Activated CD4-positive, alpha-beta T cell treated with anti-CD3 and anti-CD28 coated beads, Interleukin-2, amount 10 ng/mL, durations not matched to agents 24 days and 14 days (primary cell): ENCODE measurements at regions of chr16 and their contacts with region 1.

Region 1: GRCh38 chr16:71288890-71289733 is at the start of gene CMTR2:
- DNase-seq: peak; percentile 97
- H3K4me3 Mint-ChIP-seq: peak within 1 kb of the TSS; percentile 85
- H3K27ac Mint-ChIP-seq: peak within 1 kb of the TSS; percentile 87
- H3K4me1 Mint-ChIP-seq: peaks cover 15% of the 10 kb centered on the region
- H3K27me3 Mint-ChIP-seq: peaks cover 16% of the 10 kb centered on the region
- total RNA-seq, gene CMTR2: 20.0 and 20.8 TPM in 2 replicates

Region 2: GRCh38 chr16:71461686-71462648 is 172.9 kb after region 1 on chr16 and contains the start of gene ZNF23:
- intact Hi-C with region 1: loop called (anchors 10 kb)
- DNase-seq: peak; percentile 94
- H3K4me3 Mint-ChIP-seq: peak within 1 kb of the TSS; percentile 91
- H3K27ac Mint-ChIP-seq: peak within 1 kb of the TSS; percentile 81
- H3K4me1 Mint-ChIP-seq: peaks cover 9% of the 10 kb centered on the region
- H3K27me3 Mint-ChIP-seq: no peaks in the 10 kb centered on the region
- total RNA-seq, gene ZNF23: 5.2 and 6.1 TPM in 2 replicates

Region 3: GRCh38 chr16:72008424-72009216 is 719.5 kb after region 1 on chr16 and contains the start of gene DHODH:
- intact Hi-C with region 1: loop called (anchors 10 kb)
- DNase-seq: peak; percentile 99
- H3K4me3 Mint-ChIP-seq: peak within 1 kb of the TSS; percentile 91
- H3K27ac Mint-ChIP-seq: peak within 1 kb of the TSS; percentile 93
- H3K4me1 Mint-ChIP-seq: peaks cover 22% of the 10 kb centered on the region
- H3K27me3 Mint-ChIP-seq: peaks cover 5% of the 10 kb centered on the region
- total RNA-seq, gene DHODH: 31.8 and 33.7 TPM in 2 replicates